ENCODE measurements at regions of chr2 and their contacts with region 1.

Region 1: DNA sequence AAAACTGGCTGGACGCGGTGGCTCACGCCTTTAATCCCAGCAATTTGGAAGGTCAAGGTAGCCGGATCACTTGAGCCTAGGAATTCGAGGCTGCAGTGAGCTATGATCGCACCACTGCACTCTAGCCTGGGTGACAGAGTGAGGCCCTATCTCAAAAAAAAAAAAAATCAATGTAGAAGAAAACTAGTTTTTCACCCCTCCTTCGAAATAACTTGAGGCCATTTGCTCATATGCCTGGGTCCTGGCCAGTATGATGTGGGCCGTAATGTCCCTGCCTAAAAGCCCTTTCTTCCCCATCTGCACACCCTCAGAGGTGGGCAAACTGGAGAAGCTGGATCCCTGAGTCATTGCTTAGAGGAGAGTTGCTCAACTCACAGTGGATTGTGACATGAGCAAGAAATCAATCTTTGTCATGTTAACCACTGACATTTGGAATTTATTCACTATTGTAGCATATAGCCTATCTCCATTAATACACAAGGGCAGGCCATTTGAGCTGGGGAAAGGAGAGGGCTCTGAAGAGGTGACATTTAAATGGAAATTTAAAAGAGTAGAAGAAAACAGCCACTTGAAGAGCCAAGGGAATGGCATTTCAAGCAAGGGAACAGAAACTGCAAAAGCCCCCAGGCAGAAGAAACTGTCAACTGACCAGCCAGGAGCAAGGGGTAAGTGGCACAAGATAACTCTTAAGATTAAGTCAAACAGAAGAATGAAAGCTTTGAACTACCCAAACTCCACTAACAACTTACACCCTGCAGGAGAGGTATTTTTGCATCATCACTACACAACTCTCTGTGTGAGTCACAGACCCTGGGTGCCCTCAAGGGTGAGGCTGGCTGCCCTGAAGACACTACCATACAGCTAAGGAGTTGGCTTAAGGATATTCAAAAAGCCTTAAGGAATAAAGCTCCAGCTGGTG is 7.6 kb upstream of the METTL21A start:
- DNase-seq: peak; percentile 76 to 77
- H3K4me3 ChIP-seq: no peak overlapping the region
- H3K4me3 Mint-ChIP-seq: peak overlapping the region; percentile 15
- H3K27ac Mint-ChIP-seq: peak overlapping the region; percentile 80
- H3K4me1 ChIP-seq: peaks cover 30% of the 10 kb centered on the region
- H3K4me1 Mint-ChIP-seq: peaks cover 23% of the 10 kb centered on the region
- H3K27me3 ChIP-seq: no peaks in the 10 kb centered on the region
- H3K27me3 Mint-ChIP-seq: no peaks in the 10 kb centered on the region
- CTCF ChIP-seq: no peak

Region 2: DNA sequence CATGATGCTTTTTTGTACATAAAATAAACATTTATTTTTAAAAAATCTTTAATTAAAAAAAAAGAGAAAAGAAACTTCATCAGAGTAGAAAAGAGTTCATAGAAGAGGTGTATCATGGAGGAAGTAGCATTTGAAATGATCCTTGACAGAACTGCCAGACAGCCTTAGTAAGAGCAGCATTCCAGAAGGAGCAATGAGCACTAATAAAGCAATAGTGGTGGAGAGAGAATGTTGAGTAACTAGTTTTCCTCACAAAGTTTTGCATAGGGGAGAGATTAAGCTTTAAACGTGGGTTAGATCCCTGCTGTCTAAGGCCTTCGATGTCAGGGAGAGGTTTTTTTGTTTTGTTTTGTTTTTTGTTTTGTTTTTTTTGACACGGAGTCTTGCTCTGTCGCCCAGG is 22.2 kb after region 1 on chr2:
- CTCF ChIA-PET with region 1: no interaction called
- POLR2A ChIA-PET with region 1: no interaction called
- intact Hi-C with region 1: loop called (anchors 2 kb)
- DNase-seq: peak in 1 of 2 experiments; percentile 17
- H3K4me3 ChIP-seq: no peak overlapping the region
- H3K4me3 Mint-ChIP-seq: no peak overlapping the region
- H3K27ac Mint-ChIP-seq: no peak overlapping the region
- H3K4me1 ChIP-seq: no peaks in the 10 kb centered on the region
- H3K4me1 Mint-ChIP-seq: peaks cover 6% of the 10 kb centered on the region
- H3K27me3 ChIP-seq: no peaks in the 10 kb centered on the region
- H3K27me3 Mint-ChIP-seq: no peaks in the 10 kb centered on the region
- CTCF ChIP-seq: no peak

Region 3: DNA sequence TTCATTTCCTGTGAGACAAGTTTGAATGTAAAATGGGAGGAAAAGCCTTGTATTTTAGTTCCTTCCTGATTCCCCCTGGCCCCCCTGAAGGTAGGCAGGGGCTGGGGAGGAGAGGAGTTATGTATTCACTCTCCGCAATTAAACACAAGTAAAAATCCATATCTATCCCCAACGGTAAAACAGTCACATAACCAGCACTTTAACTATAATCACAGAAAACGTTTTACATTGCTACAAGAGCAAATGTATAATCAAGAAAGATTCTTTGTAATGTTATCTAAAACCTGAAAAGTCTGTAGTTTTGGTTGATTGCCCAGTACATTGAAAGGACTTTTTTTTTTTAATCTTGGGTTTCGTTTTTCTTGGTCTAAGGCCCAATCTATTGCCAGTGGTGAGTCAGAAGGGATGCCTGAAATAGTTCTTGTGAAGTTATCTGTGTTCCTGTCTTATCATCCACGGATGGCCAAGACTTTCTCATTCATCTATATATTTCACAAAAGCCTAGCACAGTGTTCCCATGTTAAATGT is 44.1 kb after region 1 on chr2:
- CTCF ChIA-PET with region 1: no interaction called
- POLR2A ChIA-PET with region 1: no interaction called
- intact Hi-C with region 1: loop called (anchors 1 kb)
- DNase-seq: peak; percentile 40 to 55
- H3K4me3 ChIP-seq: no peak overlapping the region
- H3K4me3 Mint-ChIP-seq: peak overlapping the region; percentile 65
- H3K27ac Mint-ChIP-seq: peak overlapping the region; percentile 96
- H3K4me1 ChIP-seq: peaks cover 34% of the 10 kb centered on the region
- H3K4me1 Mint-ChIP-seq: peaks cover 35% of the 10 kb centered on the region
- H3K27me3 ChIP-seq: no peaks in the 10 kb centered on the region
- H3K27me3 Mint-ChIP-seq: no peaks in the 10 kb centered on the region
- CTCF ChIP-seq: no peak

Region 4: GRCh38 chr2:207746131-207746530 is 113.3 kb after region 1 on chr2:
- CTCF ChIA-PET with region 1: no interaction called
- POLR2A ChIA-PET with region 1: no interaction called
- intact Hi-C with region 1: no loop called
- DNase-seq: peak; percentile 73 to 78
- H3K4me3 ChIP-seq: no peak overlapping the region
- H3K4me3 Mint-ChIP-seq: no peak overlapping the region
- H3K27ac Mint-ChIP-seq: peak overlapping the region; percentile 12
- H3K4me1 ChIP-seq: peaks cover 52% of the 10 kb centered on the region
- H3K4me1 Mint-ChIP-seq: peaks cover 23% of the 10 kb centered on the region
- H3K27me3 ChIP-seq: no peaks in the 10 kb centered on the region
- H3K27me3 Mint-ChIP-seq: no peaks in the 10 kb centered on the region
- CTCF ChIP-seq: peak; percentile 94 to 95

Measured in Caco-2 (cell line).